Activated CD4-positive, alpha-beta memory T cell treated with anti-CD3 and anti-CD28 coated beads, Interleukin-2, amount 10 ng/mL, durations not matched to agents 7 days and 5 days (primary cell): ENCODE measurements at regions of chr21 and their contacts with region 1.

Region 1: GRCh38 chr21:25561668-25562641 is 45.3 kb downstream of the MRPL39 start:
- DNase-seq: peak; percentile 79
- H3K4me3 Mint-ChIP-seq: peak overlapping the region; percentile 92
- H3K27ac Mint-ChIP-seq: peak overlapping the region; percentile 96
- H3K4me1 Mint-ChIP-seq: peaks cover 68% of the 10 kb centered on the region
- H3K27me3 Mint-ChIP-seq: no peaks in the 10 kb centered on the region

Region 2: GRCh38 chr21:25421327-25422028 is 140.5 kb before region 1 on chr21:
- CTCF ChIA-PET with region 1: interaction called, 5 read pairs
- POLR2A ChIA-PET with region 1: interaction called, 20 read pairs
- DNase-seq: peak; percentile 68
- H3K4me3 Mint-ChIP-seq: peak overlapping the region; percentile 65
- H3K27ac Mint-ChIP-seq: peak overlapping the region; percentile 82
- H3K4me1 Mint-ChIP-seq: peaks cover 41% of the 10 kb centered on the region
- H3K27me3 Mint-ChIP-seq: no peaks in the 10 kb centered on the region

Region 3: GRCh38 chr21:25507522-25507921 is 54.4 kb before region 1 on chr21:
- CTCF ChIA-PET with region 1: interaction called, 3 read pairs
- POLR2A ChIA-PET with region 1: interaction called, 22 read pairs
- DNase-seq: no peak
- H3K4me3 Mint-ChIP-seq: no peak overlapping the region
- H3K27ac Mint-ChIP-seq: no peak overlapping the region
- H3K4me1 Mint-ChIP-seq: peaks cover 44% of the 10 kb centered on the region
- H3K27me3 Mint-ChIP-seq: no peaks in the 10 kb centered on the region

Region 4: GRCh38 chr21:25573409-25574206 is 11.7 kb after region 1 on chr21:
- CTCF ChIA-PET with region 1: interaction called, 5 read pairs
- POLR2A ChIA-PET with region 1: interaction called, 112 read pairs
- DNase-seq: peak; percentile 42
- H3K4me3 Mint-ChIP-seq: peak overlapping the region; percentile 61
- H3K27ac Mint-ChIP-seq: peak overlapping the region; percentile 85
- H3K4me1 Mint-ChIP-seq: peaks cover 74% of the 10 kb centered on the region
- H3K27me3 Mint-ChIP-seq: no peaks in the 10 kb centered on the region